Posterior vena cava (tissue), 2 donors: ENCODE measurements at regions of chrX and their contacts with region 1.

Region 1: DNA sequence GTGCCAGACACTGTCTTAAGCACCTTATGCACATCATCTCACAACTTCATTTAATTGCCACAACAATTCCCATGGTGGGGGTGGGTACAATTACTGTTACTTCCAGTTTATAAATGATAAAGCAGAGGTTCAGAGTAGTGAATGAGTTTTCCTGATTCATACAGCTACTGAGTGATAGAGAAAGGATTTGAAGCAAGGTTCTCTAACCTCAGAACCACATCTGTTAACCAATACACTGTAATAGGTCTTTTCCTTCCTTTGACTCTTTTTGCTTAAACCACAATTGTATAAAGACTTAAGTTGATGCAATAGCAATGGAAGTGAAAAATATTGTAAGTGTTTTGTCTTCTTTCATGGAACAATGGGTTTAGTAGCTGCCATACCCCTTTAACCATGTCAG is 43.5 kb upstream of the PAK3 start:
- DNase-seq: no peak

Region 2: GRCh38 chrX:109966246-109966645 is 1086.2 kb before region 1 on chrX:
- intact Hi-C with region 1: loop called in 1 of 2 experiments (anchors 10 kb)
- DNase-seq: no peak

Region 3: DNA sequence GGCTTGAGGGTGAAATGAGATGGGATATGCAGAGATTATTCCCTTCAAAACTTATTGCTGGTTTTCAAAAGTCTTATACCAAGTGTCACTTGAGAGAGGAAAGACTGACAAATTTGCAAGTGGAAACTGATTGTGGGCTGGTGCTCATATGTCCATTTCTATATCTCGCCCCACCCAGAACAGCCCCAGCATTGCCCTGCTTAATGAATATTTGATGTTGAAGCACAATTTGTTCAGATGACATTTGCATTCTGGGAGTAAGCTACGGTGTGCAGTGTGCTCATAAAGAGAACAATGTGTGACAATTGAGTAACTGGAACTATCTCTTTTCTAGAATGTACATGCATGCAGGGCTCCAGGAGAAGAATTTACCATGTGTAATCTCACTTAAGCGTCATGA is 1253.5 kb after region 1 on chrX:
- intact Hi-C with region 1: loop called in 1 of 2 experiments (anchors 5 kb)
- DNase-seq: no peak